ENCODE measurements at regions of chr2 and their contacts with region 1.

Region 1: DNA sequence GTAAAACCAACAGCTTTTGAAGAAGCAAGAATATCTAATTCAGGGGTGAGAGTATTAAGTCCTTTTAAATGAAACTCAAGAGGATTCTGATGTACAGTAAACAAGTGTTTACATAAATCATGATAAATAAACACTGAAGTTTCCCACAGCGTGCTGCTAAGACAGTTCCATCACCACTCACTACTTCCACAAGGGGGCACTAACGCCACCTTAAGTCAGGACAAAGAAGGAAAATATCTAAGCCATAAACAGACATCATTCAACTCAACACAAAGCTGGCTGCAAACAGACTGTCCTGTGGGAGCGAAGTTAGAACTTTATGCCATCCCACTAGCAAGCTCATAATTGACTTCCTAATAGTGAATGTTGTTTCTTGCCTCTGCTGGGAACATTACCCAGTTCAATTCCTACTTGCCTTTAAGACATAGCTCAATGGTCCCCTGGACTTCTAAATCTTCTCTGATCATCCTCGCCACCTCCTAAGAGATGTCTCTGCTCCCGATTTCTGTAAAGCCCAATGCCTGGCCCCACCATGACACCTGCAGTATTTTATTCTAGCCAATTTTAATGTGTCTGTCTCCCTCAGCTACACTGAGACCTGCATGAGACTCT is 36.5 kb downstream of the MRPL44 start:
- DNase-seq: peak in 1 of 2 experiments; percentile 68
- H3K4me3 ChIP-seq: no peak overlapping the region
- H3K27ac ChIP-seq: no peak overlapping the region
- H3K4me1 ChIP-seq: peaks cover 0 to 4% (median 0%) of the 10 kb centered on the region in 4 experiments; a peak in 1 of 7 replicates
- H3K27me3 ChIP-seq: no peaks in the 10 kb centered on the region
- CTCF ChIP-seq: peak; percentile 43 to 87 (median 77)
- EP300 ChIP-seq: no peak
- POLR2A ChIP-seq: no peak
- RAD21 ChIP-seq: peak; percentile 88 to 92

Region 2: DNA sequence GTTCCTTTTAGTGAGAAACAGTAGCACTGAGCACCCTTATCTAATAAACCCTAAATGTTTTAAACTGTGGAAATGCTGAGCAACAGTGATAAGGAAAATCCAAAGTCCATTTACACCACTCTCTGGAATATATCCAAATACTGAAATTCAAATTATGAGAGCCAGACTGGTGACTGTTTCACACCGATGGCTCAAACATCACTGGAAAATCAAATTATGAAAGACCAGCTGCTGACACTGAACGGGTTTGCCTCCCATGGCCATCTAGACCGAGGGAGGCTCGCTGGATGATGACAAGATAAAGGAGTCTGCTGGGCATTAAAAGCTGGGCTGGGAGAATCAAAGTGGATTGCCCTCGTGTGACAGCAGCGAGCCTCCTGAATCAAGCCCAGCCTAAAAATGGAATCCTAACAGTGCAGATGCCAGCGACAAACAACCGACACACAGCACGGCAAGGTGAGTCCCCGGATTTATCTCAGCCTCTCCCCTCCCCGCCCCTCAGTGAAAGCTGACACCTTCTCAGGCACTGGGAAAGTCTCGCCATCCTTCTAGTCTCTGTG is 15.1 kb after region 1 on chr2:
- CTCF ChIA-PET with region 1: interaction called, 53 read pairs
- POLR2A ChIA-PET with region 1: no interaction called
- DNase-seq: peak in 1 of 2 experiments; percentile 67
- H3K4me3 ChIP-seq: no peak overlapping the region; a peak in 1 of 8 replicates
- H3K27ac ChIP-seq: no peak overlapping the region
- H3K4me1 ChIP-seq: peaks cover 0 to 12% (median 5%) of the 10 kb centered on the region in 4 experiments; a peak in 6 of 7 replicates
- H3K27me3 ChIP-seq: no peaks in the 10 kb centered on the region
- CTCF ChIP-seq: no peak
- EP300 ChIP-seq: no peak
- POLR2A ChIP-seq: no peak
- RAD21 ChIP-seq: no peak

Region 3: DNA sequence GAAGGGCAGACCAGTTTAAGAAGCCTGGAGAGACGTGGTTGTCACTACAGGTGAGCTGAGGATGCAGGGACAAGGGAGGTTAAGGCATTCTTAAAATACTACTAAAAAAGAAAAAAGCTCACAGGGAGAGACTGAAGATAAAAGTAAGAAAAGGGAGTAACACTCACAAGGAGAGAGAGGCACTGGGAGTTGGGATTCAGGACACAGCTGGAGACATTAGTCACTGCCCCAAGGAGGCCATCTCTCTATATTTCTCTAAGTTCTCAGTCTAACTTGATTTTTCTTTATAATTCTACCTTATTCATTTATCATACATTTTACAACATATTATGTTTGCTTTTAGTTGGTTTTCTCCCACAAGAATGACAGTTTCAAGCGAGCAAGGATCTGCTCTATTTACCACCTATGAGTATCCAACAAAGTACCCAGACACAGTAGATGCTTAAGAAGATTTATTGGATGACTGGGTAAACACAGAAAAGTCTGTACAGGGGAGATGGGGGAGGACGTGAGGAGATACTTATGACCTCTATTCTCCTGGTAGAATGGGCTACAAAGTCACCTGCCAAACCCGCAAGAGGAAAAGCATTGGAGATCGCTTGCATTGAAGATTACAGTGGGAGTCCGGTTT is 43.1 kb after region 1 on chr2:
- CTCF ChIA-PET with region 1: interaction called, 29 read pairs
- POLR2A ChIA-PET with region 1: interaction called, 3 read pairs
- DNase-seq: no peak
- H3K4me3 ChIP-seq: no peak overlapping the region
- H3K27ac ChIP-seq: no peak overlapping the region
- H3K4me1 ChIP-seq: peaks cover 3 to 10% (median 6%) of the 10 kb centered on the region in 4 experiments; a peak in 6 of 7 replicates
- H3K27me3 ChIP-seq: peaks cover 0 to 16% (median 9%) of the 10 kb centered on the region in 4 experiments; a peak in 5 of 7 replicates
- CTCF ChIP-seq: no peak
- EP300 ChIP-seq: no peak
- POLR2A ChIP-seq: no peak
- RAD21 ChIP-seq: no peak

Region 4: DNA sequence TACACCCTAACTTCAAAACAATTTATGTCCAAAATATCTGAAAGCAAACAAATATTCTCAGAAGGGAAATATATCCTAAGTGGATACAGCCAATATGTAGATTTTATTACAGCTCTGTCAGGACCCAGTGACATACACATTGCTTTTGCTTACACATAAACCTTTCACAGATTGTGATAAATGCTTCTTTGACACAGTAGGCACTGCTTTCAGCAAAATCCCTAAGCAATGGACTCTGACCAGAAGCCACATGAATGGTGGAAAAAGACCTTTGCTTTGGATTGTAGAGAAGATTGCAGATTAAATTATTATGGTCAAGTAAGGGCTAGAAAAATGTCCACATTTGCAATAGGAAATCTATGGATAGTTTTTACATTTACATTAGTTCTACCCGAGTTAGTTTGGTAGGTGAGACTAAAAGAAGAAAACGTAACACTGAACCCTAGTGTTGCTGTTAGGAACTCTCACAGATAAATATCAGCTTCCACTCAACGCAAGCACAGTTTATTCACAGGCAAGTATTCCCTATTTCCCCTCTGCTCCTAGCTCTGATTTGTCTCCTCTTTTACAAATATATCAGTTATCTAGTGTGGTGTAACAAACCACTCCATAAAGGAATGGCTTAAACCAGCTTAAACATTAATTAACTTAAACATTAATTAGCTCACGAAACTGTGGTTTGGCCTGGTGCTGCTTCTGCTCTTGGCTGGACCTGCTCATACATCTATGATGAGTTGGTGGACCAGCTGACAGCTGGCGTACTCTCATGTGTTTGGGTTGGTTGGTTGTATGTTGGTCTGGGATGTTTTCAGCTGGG is 69.0 kb after region 1 on chr2:
- CTCF ChIA-PET with region 1: interaction called, 148 read pairs
- POLR2A ChIA-PET with region 1: no interaction called
- DNase-seq: no peak
- H3K4me3 ChIP-seq: no peak overlapping the region
- H3K27ac ChIP-seq: no peak overlapping the region
- H3K4me1 ChIP-seq: no peaks in the 10 kb centered on the region
- H3K27me3 ChIP-seq: no peaks in the 10 kb centered on the region
- CTCF ChIP-seq: peak in 2 of 3 experiments; percentile 30 to 40; a peak in 2 of 4 replicates
- EP300 ChIP-seq: no peak
- POLR2A ChIP-seq: no peak
- RAD21 ChIP-seq: peak; percentile 62 to 64

Region 5: GRCh38 chr2:224208007-224208406 is 214.3 kb after region 1 on chr2:
- CTCF ChIA-PET with region 1: interaction called, 10 read pairs
- POLR2A ChIA-PET with region 1: no interaction called
- DNase-seq: no peak
- H3K4me3 ChIP-seq: no peak overlapping the region
- H3K27ac ChIP-seq: no peak overlapping the region
- H3K4me1 ChIP-seq: 0 out of 7 replicates have a peak, but pooled peaks cover 0 to 3% (median 0%) of the 10 kb centered on the region in 4 experiments
- H3K27me3 ChIP-seq: no peaks in the 10 kb centered on the region
- CTCF ChIP-seq: no peak
- EP300 ChIP-seq: no peak
- POLR2A ChIP-seq: no peak
- RAD21 ChIP-seq: no peak

Region 6: GRCh38 chr2:224357098-224357901 is 363.6 kb after region 1 on chr2:
- CTCF ChIA-PET with region 1: interaction called, 18 read pairs
- POLR2A ChIA-PET with region 1: no interaction called
- DNase-seq: peak in 1 of 2 experiments; percentile 76
- H3K4me3 ChIP-seq: no peak overlapping the region
- H3K27ac ChIP-seq: no peak overlapping the region
- H3K4me1 ChIP-seq: no peaks in the 10 kb centered on the region
- H3K27me3 ChIP-seq: no peaks in the 10 kb centered on the region
- CTCF ChIP-seq: peak in 2 of 3 experiments; percentile 74 to 78; a peak in 3 of 4 replicates
- EP300 ChIP-seq: no peak
- POLR2A ChIP-seq: no peak
- RAD21 ChIP-seq: peak; percentile 89 to 91

Region 7: DNA sequence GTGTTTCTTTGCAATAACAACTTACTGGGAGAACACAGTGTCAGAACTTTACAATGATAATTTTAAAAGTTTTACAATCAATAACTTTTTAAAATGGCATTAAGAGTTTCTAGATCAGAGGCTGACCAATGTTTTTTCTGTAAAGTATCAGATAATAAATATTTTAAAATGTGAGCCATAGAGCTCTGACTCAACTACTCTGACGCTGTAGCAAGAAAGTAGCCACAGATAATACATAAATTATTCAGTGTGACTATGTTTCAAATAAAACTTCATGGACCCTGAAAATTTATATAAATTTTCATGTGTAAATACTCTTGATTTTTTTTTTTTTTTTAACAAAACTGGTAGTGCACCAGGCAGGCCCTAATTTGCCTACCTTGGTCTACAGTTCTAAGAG is 514.1 kb after region 1 on chr2:
- CTCF ChIA-PET with region 1: no interaction called
- POLR2A ChIA-PET with region 1: no interaction called
- DNase-seq: no peak
- H3K4me3 ChIP-seq: no peak overlapping the region
- H3K27ac ChIP-seq: no peak overlapping the region
- H3K4me1 ChIP-seq: no peaks in the 10 kb centered on the region
- H3K27me3 ChIP-seq: no peaks in the 10 kb centered on the region
- CTCF ChIP-seq: no peak
- EP300 ChIP-seq: no peak
- POLR2A ChIP-seq: no peak
- RAD21 ChIP-seq: no peak

Measured in H1 (cell line).